Right ventricle myocardium inferior (tissue), 1 donor: ENCODE measurements at regions of chr7 and their contacts with region 1.

Region 1: GRCh38 chr7:100852048-100852872 is at the start of gene SLC12A9:
- DNase-seq: peak; percentile 96
- ATAC-seq: peak; percentile 99
- total RNA-seq, gene SLC12A9: 10.2 TPM

Region 2: DNA sequence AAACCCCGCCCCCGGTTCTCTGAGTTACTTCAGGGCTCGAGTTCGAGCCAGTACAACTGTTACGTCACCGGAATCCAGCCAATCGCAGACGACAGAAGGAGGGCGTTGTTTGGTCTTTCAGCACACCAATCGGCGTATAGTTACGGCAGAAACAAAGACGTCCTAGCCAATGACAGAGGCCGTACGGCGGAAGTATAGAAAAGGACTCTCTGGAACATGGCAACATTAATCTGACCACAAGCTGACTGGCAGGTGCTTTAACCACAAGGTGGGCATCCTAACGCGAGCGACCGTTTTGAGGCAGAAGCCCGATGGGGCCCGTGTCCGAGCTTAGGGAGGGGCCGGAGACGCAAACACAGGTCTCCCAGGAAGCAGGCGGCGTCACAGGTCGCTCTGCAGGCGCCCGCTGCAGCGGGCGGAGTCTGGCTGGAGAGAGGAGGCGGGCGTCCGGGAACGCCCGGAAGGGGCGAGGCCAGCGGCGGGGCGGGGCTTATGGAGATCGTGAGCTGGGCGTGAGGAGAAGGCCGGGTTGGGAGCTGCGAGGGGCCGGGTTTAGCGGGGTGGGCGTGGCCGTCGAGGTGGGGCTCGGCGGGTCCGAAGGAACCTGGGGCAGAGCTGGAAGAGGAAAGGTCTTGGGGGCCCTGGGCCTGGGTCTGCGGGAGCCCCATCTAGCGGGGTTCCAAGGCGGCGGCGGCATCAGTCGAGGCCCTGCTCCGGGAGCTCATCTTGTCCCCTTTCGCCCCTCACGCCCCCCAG is 240.1 kb before region 1 on chr7 and contains the start of gene MOSPD3:
- intact Hi-C with region 1: loop called (anchors 10 kb)
- DNase-seq: peak; percentile 98
- ATAC-seq: peak; percentile 97
- total RNA-seq, gene MOSPD3: 9.3 TPM

Region 3: GRCh38 chr7:100705753-100706671 is 146.2 kb before region 1 on chr7 and contains the start of gene POP7:
- intact Hi-C with region 1: loop called (anchors 5 kb)
- DNase-seq: peak; percentile 100
- ATAC-seq: peak; percentile 98
- total RNA-seq, gene POP7: 29.2 TPM

Region 4: DNA sequence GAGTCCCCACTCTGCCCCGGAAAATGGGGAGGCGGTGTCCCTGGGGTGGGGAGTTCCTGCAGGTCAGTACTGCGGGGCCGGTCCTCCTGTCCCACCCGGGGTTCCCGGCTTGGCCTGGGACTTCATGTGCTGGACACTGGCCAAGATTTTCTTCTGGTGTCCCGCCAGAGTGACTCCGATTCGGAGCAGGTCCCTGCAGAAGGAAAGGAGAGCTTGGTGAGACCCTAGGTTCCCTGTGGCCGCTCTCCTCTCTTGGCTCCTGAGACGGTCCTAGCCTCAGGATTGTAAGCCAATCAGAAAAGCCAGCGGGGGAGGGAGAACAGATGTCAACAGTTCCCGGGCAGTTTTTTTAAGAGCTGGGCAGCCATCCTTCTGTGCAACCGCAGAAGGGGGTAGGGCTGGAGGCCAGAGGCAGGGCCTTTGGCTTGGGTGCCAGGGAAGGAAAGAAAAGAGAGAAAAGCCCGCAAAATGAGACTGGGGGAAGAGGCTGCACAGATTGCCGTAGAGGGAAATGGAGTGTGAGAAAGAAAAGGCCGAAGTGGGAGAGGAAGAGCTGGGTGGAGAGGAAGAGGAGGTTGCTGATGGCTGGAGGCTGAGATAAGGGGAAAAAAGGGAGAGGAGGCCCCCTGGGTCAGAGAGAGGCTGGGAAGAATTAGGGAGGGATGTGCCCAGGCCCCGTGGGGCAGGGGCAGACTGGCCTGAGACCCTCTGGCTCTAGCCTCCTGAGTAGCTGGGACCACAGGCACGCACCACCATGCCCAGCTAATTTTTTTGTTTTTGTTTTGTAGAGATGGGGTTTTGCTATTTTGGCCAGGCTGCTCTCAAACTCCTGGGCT is 48.6 kb before region 1 on chr7:
- intact Hi-C with region 1: loop called (anchors 1 kb)
- DNase-seq: peak; percentile 82
- ATAC-seq: peak; percentile 85

Region 5: GRCh38 chr7:100894860-100895421 is 42.7 kb after region 1 on chr7:
- intact Hi-C with region 1: no loop called
- DNase-seq: peak; percentile 86
- ATAC-seq: no peak